PC-3 (cell line): ENCODE measurements at regions of chr4 and their contacts with region 1.

Region 1: DNA sequence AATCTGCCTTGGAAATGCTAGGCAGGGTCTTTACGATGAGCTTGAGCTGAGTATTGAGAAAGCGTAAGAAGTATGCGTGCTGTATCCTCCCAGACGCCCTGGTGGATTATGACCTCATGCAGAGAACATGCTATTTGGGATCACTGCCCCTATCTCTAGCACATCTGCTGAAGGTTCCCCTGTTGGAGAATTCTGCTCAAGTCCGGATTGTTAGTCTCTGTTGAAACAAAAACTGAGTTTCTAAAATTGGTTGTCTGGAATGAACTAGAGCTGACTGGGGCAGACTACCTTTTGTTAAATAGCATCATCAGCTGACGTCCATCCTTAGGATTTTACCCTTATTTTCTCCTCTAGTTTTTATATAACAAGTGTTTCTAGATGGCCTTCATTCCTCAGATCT is 7.5 kb downstream of the FHDC1 start:
- DNase-seq: no peak
- ATAC-seq: no peak
- H3K4me3 ChIP-seq: no peak overlapping the region
- H3K27ac ChIP-seq: no peak overlapping the region
- H3K4me1 ChIP-seq: no peaks in the 10 kb centered on the region
- H3K27me3 ChIP-seq: no peaks in the 10 kb centered on the region
- CTCF ChIP-seq: no peak

Region 2: DNA sequence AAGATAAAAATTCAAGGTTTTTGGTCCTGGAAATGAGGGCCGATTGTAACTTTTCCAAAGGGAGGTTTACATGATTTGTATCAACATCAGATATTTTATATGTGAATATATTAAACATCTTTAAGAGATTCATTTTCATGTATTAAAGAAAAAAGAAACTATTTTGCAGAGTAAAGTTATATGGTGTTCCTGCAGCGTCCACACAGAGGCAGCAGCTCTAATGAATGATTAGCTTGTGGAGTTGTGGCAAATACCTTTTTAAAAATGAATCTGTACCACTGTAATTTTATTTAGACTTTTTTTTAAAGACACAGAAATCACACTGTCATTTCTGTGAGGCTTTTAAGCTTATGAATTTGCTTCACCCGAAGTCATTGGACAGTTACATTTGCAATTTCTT is 33.2 kb before region 1 on chr4:
- CTCF ChIA-PET with region 1: no interaction called
- POLR2A ChIA-PET with region 1: interaction called, 13 read pairs
- intact Hi-C with region 1: no loop called
- DNase-seq: no peak
- ATAC-seq: no peak
- H3K4me3 ChIP-seq: no peak overlapping the region
- H3K27ac ChIP-seq: no peak overlapping the region
- H3K4me1 ChIP-seq: no peaks in the 10 kb centered on the region
- H3K27me3 ChIP-seq: no peaks in the 10 kb centered on the region
- CTCF ChIP-seq: no peak; the same call in 1 of the 2 replicates